Posterior cingulate gyrus (tissue), 11 donors: ENCODE measurements at regions of chr13 and their contacts with region 1.

Region 1: GRCh38 chr13:52738719-52739467 is 727 bp downstream of the CNMD start:
- DNase-seq: peak in 8 of 10 donors; percentile 28 to 90 (median 60)

Region 2: GRCh38 chr13:52665325-52665724 is 73.6 kb before region 1 on chr13:
- intact Hi-C with region 1: loop called (anchors 10 kb)
- DNase-seq: no peak

Region 3: GRCh38 chr13:52797176-52797575 is 58.3 kb after region 1 on chr13:
- intact Hi-C with region 1: no loop called
- DNase-seq: no peak